ENCODE measurements at regions of chr12 and their contacts with region 1.

Region 1: GRCh38 chr12:106136263-106136662 is 2.5 kb downstream of the NUAK1 start:
- DNase-seq: peak; percentile 87 to 92 (median 89)
- ATAC-seq: peak in 2 of 4 donors; percentile 10 to 47
- H3K4me3 ChIP-seq: peak overlapping the region; percentile 73 to 96 (median 90)
- H3K27ac ChIP-seq: peak overlapping the region; percentile 95 to 100 (median 97)
- H3K4me1 ChIP-seq: peaks cover 3 to 67% (median 50%) of the 10 kb centered on the region in 12 donors
- H3K27me3 ChIP-seq: peaks cover 0 to 33% (median 0%) of the 10 kb centered on the region in 9 donors
- CTCF ChIP-seq: peak; percentile 82 to 96 (median 89)
- POLR2A ChIP-seq: peak in 1 of 2 donors; percentile 36

Region 2: DNA sequence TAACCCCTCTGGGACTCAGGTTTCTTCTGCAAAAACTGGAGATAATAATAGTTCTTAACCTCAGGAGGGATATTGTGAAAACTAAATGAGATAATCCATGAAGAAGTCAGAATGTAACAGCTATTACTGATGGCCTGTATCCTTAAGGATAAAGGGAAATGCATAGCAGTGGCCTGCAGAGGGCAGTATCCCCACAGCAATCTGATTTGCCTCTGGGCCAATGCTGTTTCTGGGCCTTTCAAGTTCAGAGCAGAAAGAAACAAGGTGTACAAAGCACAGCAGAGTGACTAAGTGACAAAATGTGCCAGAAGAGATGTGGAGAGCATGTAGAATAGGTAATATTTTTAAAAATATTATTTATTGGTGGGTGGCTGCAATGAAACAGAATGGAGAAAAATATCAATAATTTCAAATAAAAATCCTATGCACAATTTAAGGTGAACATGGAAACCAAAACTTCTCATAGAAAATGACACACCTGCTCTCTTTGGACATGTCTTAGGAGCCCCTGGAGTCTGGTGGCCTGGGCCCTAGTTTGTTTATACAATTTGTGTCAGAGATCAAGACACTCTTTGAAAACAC is 715.5 kb before region 1 on chr12:
- intact Hi-C with region 1: loop called (anchors 1 to 5 kb)
- DNase-seq: peak; percentile 70 to 77 (median 74)
- ATAC-seq: peak; percentile 63 to 93 (median 90)
- H3K4me3 ChIP-seq: no peak overlapping the region
- H3K27ac ChIP-seq: peak overlapping the region in 1 of 12 donors; percentile 20
- H3K4me1 ChIP-seq: peaks cover 0 to 6% (median 0%) of the 10 kb centered on the region in 12 donors
- H3K27me3 ChIP-seq: no peaks in the 10 kb centered on the region
- CTCF ChIP-seq: peak; percentile 84 to 94 (median 92)
- POLR2A ChIP-seq: no peak

Region 3: GRCh38 chr12:105741744-105742566 is 394.3 kb before region 1 on chr12:
- intact Hi-C with region 1: loop called in 1 of 10 experiments (anchors 10 kb)
- DNase-seq: peak in 4 of 5 donors; percentile 34 to 55 (median 43)
- ATAC-seq: peak in 3 of 4 donors; percentile 55 to 80 (median 67)
- H3K4me3 ChIP-seq: peak overlapping the region in 1 of 12 donors; percentile 4
- H3K27ac ChIP-seq: peak overlapping the region in 11 of 12 donors; percentile 33 to 76 (median 65)
- H3K4me1 ChIP-seq: peaks cover 19 to 61% (median 52%) of the 10 kb centered on the region in 12 donors
- H3K27me3 ChIP-seq: peaks cover 0 to 3% (median 0%) of the 10 kb centered on the region in 9 donors
- CTCF ChIP-seq: no peak
- POLR2A ChIP-seq: no peak

Region 4: GRCh38 chr12:105922670-105923102 is 213.6 kb before region 1 on chr12:
- intact Hi-C with region 1: loop called in 1 of 10 experiments (anchors 2 kb)
- DNase-seq: peak in 1 of 5 donors; percentile 12
- ATAC-seq: peak; percentile 88 to 90 (median 88)
- H3K4me3 ChIP-seq: no peak overlapping the region
- H3K27ac ChIP-seq: peak overlapping the region; percentile 33 to 91 (median 72)
- H3K4me1 ChIP-seq: peaks cover 0 to 25% (median 7%) of the 10 kb centered on the region in 12 donors
- H3K27me3 ChIP-seq: no peaks in the 10 kb centered on the region
- CTCF ChIP-seq: no peak
- POLR2A ChIP-seq: no peak

Region 5: DNA sequence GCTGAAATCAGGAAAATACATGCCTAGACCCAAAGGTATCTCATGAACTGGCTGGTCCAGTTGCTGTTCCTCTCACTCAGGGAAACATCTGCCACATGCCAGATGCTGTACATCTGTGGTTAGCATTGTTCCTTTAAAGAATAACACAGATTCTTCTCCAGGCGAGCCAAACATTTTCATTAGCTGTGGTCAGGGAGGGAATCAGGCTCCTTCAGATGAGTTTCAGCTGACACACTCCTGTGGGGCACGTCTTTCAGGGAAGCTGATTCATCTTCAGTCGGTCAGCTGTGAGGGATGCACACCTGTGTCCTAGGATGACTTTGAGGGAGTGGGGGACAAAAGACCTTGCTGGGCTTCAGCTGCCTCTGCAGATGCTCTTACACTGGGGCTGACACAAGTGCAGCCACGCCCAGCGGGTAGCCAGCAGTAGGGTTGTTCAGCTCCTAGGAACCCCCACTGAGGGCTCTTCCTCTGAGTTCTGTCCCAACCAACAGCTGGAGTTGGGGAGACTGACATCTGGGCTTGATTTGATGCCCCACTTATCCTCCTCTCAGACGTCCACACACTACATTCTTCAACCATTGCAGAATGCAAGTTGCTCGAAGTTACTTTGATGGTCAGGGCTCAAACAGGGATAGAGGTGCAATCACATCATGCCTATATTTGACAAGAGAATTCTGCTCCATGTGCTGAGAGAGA is 152.5 kb before region 1 on chr12:
- intact Hi-C with region 1: loop called in 1 of 10 experiments (anchors 5 kb)
- DNase-seq: no peak
- ATAC-seq: no peak
- H3K4me3 ChIP-seq: no peak overlapping the region
- H3K27ac ChIP-seq: no peak overlapping the region
- H3K4me1 ChIP-seq: peaks cover 0 to 17% (median 6%) of the 10 kb centered on the region in 12 donors
- H3K27me3 ChIP-seq: no peaks in the 10 kb centered on the region
- CTCF ChIP-seq: no peak
- POLR2A ChIP-seq: no peak

Region 6: GRCh38 chr12:106205208-106206071 is 69.2 kb after region 1 on chr12:
- intact Hi-C with region 1: loop called in 1 of 10 experiments (anchors 5 kb)
- DNase-seq: peak; percentile 57 to 85 (median 78)
- ATAC-seq: peak; percentile 99 to 100 (median 100)
- H3K4me3 ChIP-seq: no peak overlapping the region
- H3K27ac ChIP-seq: peak overlapping the region in 2 of 12 donors; percentile 31 to 37
- H3K4me1 ChIP-seq: no peaks in the 10 kb centered on the region
- H3K27me3 ChIP-seq: no peaks in the 10 kb centered on the region
- CTCF ChIP-seq: peak in 11 of 12 donors; percentile 24 to 60 (median 46)
- POLR2A ChIP-seq: no peak

Region 7: GRCh38 chr12:106276032-106276740 is 139.9 kb after region 1 on chr12:
- intact Hi-C with region 1: no loop called
- DNase-seq: no peak
- ATAC-seq: no peak
- H3K4me3 ChIP-seq: no peak overlapping the region
- H3K27ac ChIP-seq: no peak overlapping the region
- H3K4me1 ChIP-seq: peaks cover 0 to 16% (median 4%) of the 10 kb centered on the region in 12 donors
- H3K27me3 ChIP-seq: no peaks in the 10 kb centered on the region
- CTCF ChIP-seq: no peak
- POLR2A ChIP-seq: no peak